Activated naive CD4-positive, alpha-beta T cell treated with anti-CD3 and anti-CD28 coated beads, Interleukin-2, amount 10 ng/mL, durations not matched to agents 7 days and 5 days (primary cell): ENCODE measurements at regions of chr2 and their contacts with region 1.

Region 1: DNA sequence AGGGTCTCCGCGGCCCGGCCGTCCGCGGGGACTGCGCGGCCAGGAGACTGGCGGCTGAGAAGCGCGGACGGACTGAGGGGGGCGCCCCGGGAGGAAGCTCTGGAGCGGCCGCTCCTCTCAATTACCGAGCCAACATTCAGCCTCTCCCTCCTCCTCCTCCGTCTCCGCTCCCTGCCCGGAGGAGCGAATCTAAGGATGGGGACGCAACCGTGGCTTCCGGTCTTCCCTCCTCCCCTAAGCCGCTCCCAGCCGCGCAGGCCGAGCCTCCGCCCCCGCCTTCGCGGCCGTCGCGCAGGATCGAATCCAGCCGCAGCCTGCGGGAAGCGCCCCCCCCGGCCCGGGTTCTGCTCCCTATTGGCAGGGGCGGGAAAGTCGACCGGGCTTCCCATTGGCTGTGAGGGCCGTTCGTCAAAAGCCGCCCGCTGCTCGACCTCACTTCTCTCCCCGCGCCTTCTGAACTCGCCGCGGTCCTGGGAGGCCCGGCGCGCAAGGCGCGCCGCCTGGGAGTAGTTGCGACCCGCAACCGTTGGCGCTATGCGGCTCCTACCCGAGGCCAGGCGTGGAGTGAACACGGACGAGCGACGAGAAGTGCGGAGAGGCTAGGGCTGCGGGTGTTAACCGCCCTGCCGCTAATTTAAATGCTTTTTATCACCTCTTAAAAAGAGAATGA is at the start of gene HNRNPLL:
- DNase-seq: peak; percentile 98
- H3K4me3 Mint-ChIP-seq: peak within 1 kb of the TSS; percentile 94
- H3K27ac Mint-ChIP-seq: peak within 1 kb of the TSS; percentile 96
- H3K4me1 Mint-ChIP-seq: peaks cover 49% of the 10 kb centered on the region
- H3K27me3 Mint-ChIP-seq: no peaks in the 10 kb centered on the region

Region 2: GRCh38 chr2:38498045-38498481 is 104.8 kb before region 1 on chr2:
- CTCF ChIA-PET with region 1: no interaction called
- DNase-seq: no peak
- H3K4me3 Mint-ChIP-seq: no peak overlapping the region
- H3K27ac Mint-ChIP-seq: peak overlapping the region; percentile 50
- H3K4me1 Mint-ChIP-seq: no peaks in the 10 kb centered on the region
- H3K27me3 Mint-ChIP-seq: peaks cover 47% of the 10 kb centered on the region

Region 3: DNA sequence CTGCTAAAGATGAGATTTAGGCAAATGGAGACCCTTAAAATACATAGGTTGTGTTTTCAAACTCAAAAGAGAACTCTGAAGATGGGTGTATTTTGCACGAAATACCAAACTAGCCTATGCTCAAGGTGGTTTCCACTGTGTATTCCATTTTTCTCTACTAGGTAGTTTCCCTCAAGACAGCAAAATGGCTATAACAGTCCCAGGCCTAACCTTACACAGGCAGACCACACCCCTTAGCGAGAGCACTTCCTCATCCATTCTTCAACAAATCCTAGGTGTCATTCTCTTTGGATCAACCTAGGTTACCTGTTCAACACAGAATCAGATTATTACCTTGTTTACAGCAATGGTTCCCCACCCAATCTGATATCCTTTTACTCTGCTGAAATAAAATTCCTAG is 42.8 kb before region 1 on chr2:
- CTCF ChIA-PET with region 1: no interaction called
- DNase-seq: no peak
- H3K4me3 Mint-ChIP-seq: no peak overlapping the region
- H3K27ac Mint-ChIP-seq: no peak overlapping the region
- H3K4me1 Mint-ChIP-seq: no peaks in the 10 kb centered on the region
- H3K27me3 Mint-ChIP-seq: no peaks in the 10 kb centered on the region

Region 4: DNA sequence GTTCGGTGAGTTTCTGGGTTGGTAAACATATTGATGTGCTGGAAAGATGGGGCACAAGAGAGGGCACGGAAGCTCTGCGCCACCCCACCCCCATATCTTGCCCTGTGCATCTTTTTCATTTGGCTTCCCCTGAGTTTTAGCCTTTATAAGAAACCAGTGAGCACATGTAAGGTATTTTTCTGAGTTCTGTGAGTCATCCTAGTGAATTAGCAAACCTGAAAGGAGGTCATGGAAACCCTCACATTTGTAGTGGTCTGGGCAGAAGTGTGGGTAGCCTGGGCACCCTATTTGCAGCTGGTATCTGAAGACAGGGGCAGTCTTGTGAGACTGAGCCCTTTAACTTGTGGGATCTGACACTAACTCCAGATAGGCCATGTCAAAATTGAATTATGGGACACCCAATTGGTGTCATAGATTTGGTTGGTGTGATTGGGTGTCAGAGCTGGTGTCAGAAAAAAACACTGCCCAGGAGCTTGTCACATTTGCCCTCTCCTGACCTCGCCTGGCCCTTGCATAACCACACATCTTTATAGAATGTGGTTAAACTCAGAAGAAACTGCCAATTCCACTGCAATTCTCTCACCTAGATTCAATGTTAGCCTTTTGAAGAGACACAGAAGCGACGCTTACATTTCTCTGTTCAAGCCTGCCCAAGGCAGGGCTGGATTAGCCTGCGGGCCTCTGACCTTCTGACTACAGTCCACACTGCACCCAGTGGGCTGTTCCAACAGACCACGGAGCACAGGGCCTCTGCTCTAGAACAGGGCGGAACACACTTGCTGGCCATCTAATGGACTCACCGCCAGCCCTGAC is 51.1 kb after region 1 on chr2:
- CTCF ChIA-PET with region 1: interaction called, 15 read pairs
- DNase-seq: peak; percentile 58
- H3K4me3 Mint-ChIP-seq: peak overlapping the region; percentile 41
- H3K27ac Mint-ChIP-seq: peak overlapping the region; percentile 92
- H3K4me1 Mint-ChIP-seq: peaks cover 66% of the 10 kb centered on the region
- H3K27me3 Mint-ChIP-seq: no peaks in the 10 kb centered on the region

Region 5: GRCh38 chr2:38665854-38666555 is 63.1 kb after region 1 on chr2 and contains the start of gene GALM:
- CTCF ChIA-PET with region 1: interaction called, 55 read pairs
- DNase-seq: peak; percentile 72
- H3K4me3 Mint-ChIP-seq: peak within 1 kb of the TSS; percentile 73
- H3K27ac Mint-ChIP-seq: peak within 1 kb of the TSS; percentile 91
- H3K4me1 Mint-ChIP-seq: peaks cover 68% of the 10 kb centered on the region
- H3K27me3 Mint-ChIP-seq: no peaks in the 10 kb centered on the region

Region 6: GRCh38 chr2:38685116-38685735 is 82.4 kb after region 1 on chr2:
- CTCF ChIA-PET with region 1: interaction called, 17 read pairs
- DNase-seq: no peak
- H3K4me3 Mint-ChIP-seq: no peak overlapping the region
- H3K27ac Mint-ChIP-seq: no peak overlapping the region
- H3K4me1 Mint-ChIP-seq: peaks cover 44% of the 10 kb centered on the region
- H3K27me3 Mint-ChIP-seq: no peaks in the 10 kb centered on the region

Region 7: DNA sequence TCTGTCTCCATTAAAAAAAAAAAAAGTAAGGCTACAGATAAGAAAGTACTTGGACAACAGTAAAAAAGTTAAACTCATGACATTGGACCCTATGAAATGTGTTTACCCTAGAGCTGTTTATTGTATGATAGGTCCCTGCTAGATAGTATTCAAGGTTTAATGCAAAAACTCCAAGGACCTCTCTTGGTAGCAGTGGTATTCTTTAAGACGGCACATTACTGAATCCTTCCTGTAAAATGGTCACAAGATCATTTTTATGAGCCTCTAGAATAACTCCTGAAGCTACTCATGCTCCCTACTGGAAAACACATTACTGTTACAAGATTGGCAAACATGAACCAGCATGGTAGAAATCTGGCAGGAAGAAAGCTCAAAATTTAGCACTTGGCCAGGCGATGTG is 101.8 kb after region 1 on chr2:
- CTCF ChIA-PET with region 1: interaction called, 10 read pairs
- DNase-seq: no peak
- H3K4me3 Mint-ChIP-seq: no peak overlapping the region
- H3K27ac Mint-ChIP-seq: no peak overlapping the region
- H3K4me1 Mint-ChIP-seq: peaks cover 54% of the 10 kb centered on the region
- H3K27me3 Mint-ChIP-seq: no peaks in the 10 kb centered on the region

Region 8: DNA sequence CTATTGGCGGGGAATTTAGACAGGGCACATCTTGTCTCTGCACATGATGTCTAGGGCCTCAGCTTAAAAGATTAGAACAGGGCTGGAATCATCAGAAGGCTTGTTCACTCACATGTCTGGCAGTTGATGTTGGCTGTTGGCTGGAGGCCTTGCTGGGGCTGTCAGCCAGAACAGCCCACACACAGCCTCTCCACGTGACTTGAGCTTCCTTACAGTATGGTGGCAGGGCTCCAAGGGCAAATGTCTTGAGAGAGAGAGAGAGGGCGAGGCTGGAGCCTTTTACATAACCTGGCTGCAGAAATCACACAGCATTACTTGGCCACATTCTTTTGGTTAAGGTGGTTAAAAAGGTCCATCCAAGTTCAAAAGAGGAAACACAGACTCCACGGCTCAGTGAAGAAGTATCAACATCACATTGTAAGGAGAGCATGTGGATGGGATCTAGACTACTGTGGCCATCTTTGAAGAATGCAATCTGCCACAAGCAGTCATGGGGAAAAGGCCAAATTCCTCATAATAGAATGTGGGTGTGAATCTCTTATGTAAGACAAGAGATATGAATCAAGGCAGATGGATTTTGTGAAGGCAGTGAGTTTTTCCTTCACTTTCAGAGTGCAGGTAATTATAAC is 117.9 kb after region 1 on chr2:
- CTCF ChIA-PET with region 1: interaction called, 91 read pairs
- DNase-seq: no peak
- H3K4me3 Mint-ChIP-seq: no peak overlapping the region
- H3K27ac Mint-ChIP-seq: peak overlapping the region; percentile 45
- H3K4me1 Mint-ChIP-seq: peaks cover 40% of the 10 kb centered on the region
- H3K27me3 Mint-ChIP-seq: no peaks in the 10 kb centered on the region